Activated T-helper 1 cell treated with anti-CD3 and anti-CD28 coated beads, Interleukin-12 subunit alpha, Interleukin-12 subunit beta, Interleukin-2, Interleukin-4 antibody, amounts not matched to agents 30 ng/mL and 10 ng/mL and 1 ng/mL, durations not matched to agents 14 hours and 24 hours and 36 hours (primary cell): ENCODE measurements at regions of chr2 and their contacts with region 1.

Region 1: GRCh38 chr2:143110758-143111428 is 18.3 kb upstream of the ARHGAP15 start:
- DNase-seq: peak; percentile 43
- H3K4me3 Mint-ChIP-seq: peak overlapping the region; percentile 75
- H3K27ac Mint-ChIP-seq: peak overlapping the region; percentile 85
- H3K4me1 Mint-ChIP-seq: peaks cover 46% of the 10 kb centered on the region
- H3K27me3 Mint-ChIP-seq: no peaks in the 10 kb centered on the region

Region 2: DNA sequence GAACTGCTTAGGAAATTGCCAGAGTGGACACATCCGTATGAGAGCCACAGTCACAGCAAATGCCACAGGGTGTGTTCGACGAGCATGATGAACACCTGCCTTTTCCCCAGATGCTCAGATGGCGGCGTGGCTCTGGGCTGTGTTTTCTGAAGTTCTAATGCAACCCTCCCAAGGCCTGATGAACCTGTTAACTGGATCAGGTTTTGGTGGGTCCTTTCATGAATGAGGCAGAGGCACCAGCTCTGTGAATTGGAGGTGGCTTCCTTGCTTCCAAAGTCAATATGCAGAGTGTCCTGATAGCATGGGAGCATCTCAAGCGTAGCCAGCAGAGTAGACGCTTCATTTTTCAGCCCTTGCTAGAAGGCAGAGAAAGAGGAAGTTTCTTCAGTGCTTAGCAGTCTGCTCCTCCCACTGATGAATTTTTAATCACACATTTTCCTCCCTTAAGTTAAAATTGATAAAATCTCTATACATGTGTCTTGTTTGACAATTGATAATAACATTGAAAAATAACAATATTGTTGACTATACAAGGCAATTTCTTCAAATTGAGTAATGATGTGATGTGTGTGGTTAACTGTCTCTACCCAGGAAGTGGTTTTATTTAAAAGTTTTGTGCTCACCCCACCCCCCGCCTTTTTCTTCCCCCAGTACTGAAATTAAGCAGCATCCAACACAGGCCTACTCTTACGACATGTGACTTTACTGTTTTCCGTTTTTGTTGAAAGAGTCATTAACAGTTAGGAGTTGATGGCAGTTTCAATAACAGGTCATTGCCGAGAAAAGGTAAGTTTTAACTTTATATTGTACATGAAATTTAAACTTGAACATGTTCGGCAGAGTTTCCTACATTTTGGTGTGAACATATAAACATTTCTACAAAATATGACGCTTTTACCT is 18.0 kb after region 1 on chr2 and contains the start of gene ARHGAP15:
- intact Hi-C with region 1: loop called (anchors 1 kb)
- DNase-seq: peak; percentile 55
- H3K4me3 Mint-ChIP-seq: peak within 1 kb of the TSS; percentile 75
- H3K27ac Mint-ChIP-seq: peak within 1 kb of the TSS; percentile 93
- H3K4me1 Mint-ChIP-seq: peaks cover 40% of the 10 kb centered on the region
- H3K27me3 Mint-ChIP-seq: no peaks in the 10 kb centered on the region
- total RNA-seq, gene ARHGAP15: 64.3 and 65.3 TPM in 2 replicates

Region 3: GRCh38 chr2:143162123-143162837 is 51.4 kb after region 1 on chr2:
- intact Hi-C with region 1: loop called (anchors 1 kb)
- DNase-seq: peak; percentile 39
- H3K4me3 Mint-ChIP-seq: no peak overlapping the region
- H3K27ac Mint-ChIP-seq: peak overlapping the region; percentile 20
- H3K4me1 Mint-ChIP-seq: peaks cover 83% of the 10 kb centered on the region
- H3K27me3 Mint-ChIP-seq: no peaks in the 10 kb centered on the region

Region 4: DNA sequence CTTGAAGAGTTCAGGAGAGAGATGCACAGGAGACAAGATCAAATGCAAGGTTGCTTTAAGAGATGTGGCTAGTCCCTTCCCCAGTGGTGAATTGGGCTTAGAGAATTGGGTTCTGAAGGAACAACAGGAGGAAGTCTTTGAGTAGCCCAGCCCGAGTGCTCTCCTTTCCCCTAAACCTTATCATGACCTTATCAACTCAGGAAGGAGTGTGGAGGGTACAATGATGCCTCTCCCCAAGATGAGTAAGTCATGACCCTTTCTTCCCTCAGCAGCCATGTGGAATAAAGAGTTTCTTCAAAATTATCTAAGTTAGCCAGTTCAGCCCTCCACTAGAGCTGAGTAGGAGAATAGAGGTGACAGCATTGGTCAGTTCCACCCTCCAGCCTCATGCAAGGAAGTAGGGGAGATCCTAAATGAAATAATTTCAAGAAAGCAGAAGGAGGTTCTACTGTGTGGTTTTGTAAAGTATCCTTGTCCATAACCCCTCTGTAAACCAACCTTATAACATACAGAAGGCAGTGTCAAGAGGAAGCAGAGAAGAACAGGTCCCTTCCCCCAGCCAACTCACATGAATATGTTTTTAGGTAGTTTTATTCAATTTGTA is 106.7 kb after region 1 on chr2:
- intact Hi-C with region 1: loop called (anchors 1 kb)
- DNase-seq: no peak
- H3K4me3 Mint-ChIP-seq: no peak overlapping the region
- H3K27ac Mint-ChIP-seq: peak overlapping the region; percentile 61
- H3K4me1 Mint-ChIP-seq: peaks cover 51% of the 10 kb centered on the region
- H3K27me3 Mint-ChIP-seq: no peaks in the 10 kb centered on the region

Region 5: DNA sequence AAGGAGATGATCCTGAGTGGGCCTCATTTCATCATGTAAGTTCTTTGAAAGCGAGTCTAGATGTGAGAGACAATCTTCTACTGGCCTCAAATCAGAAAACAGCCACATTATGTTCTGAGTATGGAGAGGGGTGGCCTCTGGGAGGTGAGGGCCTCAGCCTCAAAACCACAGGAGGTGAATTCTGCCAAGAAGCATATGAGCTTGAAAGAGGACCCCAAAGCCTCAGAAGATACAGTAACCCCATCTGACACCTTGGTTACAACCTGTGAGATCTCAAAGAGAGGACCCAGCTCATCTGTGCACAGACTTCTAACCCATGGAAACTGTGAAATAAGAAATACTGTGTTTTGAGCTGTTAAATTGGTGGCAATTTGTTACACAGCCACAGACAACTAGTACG is 218.4 kb after region 1 on chr2:
- intact Hi-C with region 1: no loop called
- DNase-seq: no peak
- H3K4me3 Mint-ChIP-seq: no peak overlapping the region
- H3K27ac Mint-ChIP-seq: no peak overlapping the region
- H3K4me1 Mint-ChIP-seq: peaks cover 57% of the 10 kb centered on the region
- H3K27me3 Mint-ChIP-seq: no peaks in the 10 kb centered on the region